Gastrocnemius medialis (tissue), 4 donors: ENCODE measurements at regions of chr1 and their contacts with region 1.

Region 1: GRCh38 chr1:159214149-159214760 is 9.6 kb downstream of the ACKR1 start:
- DNase-seq: no peak
- ATAC-seq: peak; percentile 54 to 62
- H3K4me3 ChIP-seq: no peak overlapping the region
- H3K27ac ChIP-seq: no peak overlapping the region
- H3K4me1 ChIP-seq: peaks cover 0 to 5% of the 10 kb centered on the region in 2 donors
- H3K27me3 ChIP-seq: peaks cover 0 to 6% (median 4%) of the 10 kb centered on the region in 3 donors
- CTCF ChIP-seq: peak; percentile 51 to 86 (median 62)
- POLR2A ChIP-seq: no peak

Region 2: GRCh38 chr1:159071970-159072582 is 142.2 kb before region 1 on chr1:
- in situ Hi-C with region 1: no loop called
- intact Hi-C with region 1: no loop called
- DNase-seq: no peak
- ATAC-seq: peak in 1 of 2 donors; percentile 41
- H3K4me3 ChIP-seq: no peak overlapping the region
- H3K27ac ChIP-seq: no peak overlapping the region
- H3K4me1 ChIP-seq: no peaks in the 10 kb centered on the region
- H3K27me3 ChIP-seq: no peaks in the 10 kb centered on the region
- CTCF ChIP-seq: peak; percentile 19 to 59 (median 48)
- POLR2A ChIP-seq: no peak

Region 3: GRCh38 chr1:159132271-159132881 is 81.9 kb before region 1 on chr1:
- in situ Hi-C with region 1: no loop called
- intact Hi-C with region 1: loop called (anchors 5 kb)
- DNase-seq: peak; percentile 4 to 11
- ATAC-seq: no peak
- H3K4me3 ChIP-seq: no peak overlapping the region
- H3K27ac ChIP-seq: no peak overlapping the region
- H3K4me1 ChIP-seq: no peaks in the 10 kb centered on the region
- H3K27me3 ChIP-seq: no peaks in the 10 kb centered on the region
- CTCF ChIP-seq: peak; percentile 43 to 70 (median 57)
- POLR2A ChIP-seq: no peak

Region 4: GRCh38 chr1:159161001-159161718 is 53.1 kb before region 1 on chr1:
- in situ Hi-C with region 1: no loop called
- intact Hi-C with region 1: loop called (anchors 1 kb)
- DNase-seq: peak; percentile 66 to 82
- ATAC-seq: peak; percentile 98 to 100
- H3K4me3 ChIP-seq: no peak overlapping the region
- H3K27ac ChIP-seq: peak overlapping the region; percentile 71 to 86 (median 78)
- H3K4me1 ChIP-seq: peaks cover 5 to 7% of the 10 kb centered on the region in 2 donors
- H3K27me3 ChIP-seq: peaks cover 0 to 1% (median 0%) of the 10 kb centered on the region in 3 donors
- CTCF ChIP-seq: peak; percentile 81 to 99 (median 88)
- POLR2A ChIP-seq: no peak